Astrocyte of the cerebellum (primary cell): ENCODE measurements at regions of chr4 and their contacts with region 1.

Region 1: DNA sequence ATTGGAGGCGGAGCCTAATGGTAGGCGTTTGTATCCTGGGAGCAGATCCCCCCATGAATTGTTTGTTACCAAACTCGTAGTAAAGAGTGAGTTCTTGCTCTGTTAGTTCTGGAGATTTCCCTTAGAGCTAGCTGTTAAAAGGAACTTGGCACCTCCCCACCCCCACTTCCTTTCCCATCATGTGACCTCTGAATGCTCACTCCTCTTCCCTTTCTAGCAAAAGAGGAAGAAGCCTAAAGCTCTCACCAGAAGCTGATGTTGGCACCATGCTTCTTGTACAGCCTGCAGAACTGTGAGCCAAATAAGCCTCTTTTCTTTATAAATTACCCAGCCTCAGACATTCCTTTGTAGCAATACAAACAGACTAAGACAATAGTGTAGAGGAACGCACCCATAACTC is 13.8 kb upstream of the ATOH1 start:
- DNase-seq: no peak
- H3K4me3 ChIP-seq: no peak overlapping the region
- CTCF ChIP-seq: no peak

Region 2: DNA sequence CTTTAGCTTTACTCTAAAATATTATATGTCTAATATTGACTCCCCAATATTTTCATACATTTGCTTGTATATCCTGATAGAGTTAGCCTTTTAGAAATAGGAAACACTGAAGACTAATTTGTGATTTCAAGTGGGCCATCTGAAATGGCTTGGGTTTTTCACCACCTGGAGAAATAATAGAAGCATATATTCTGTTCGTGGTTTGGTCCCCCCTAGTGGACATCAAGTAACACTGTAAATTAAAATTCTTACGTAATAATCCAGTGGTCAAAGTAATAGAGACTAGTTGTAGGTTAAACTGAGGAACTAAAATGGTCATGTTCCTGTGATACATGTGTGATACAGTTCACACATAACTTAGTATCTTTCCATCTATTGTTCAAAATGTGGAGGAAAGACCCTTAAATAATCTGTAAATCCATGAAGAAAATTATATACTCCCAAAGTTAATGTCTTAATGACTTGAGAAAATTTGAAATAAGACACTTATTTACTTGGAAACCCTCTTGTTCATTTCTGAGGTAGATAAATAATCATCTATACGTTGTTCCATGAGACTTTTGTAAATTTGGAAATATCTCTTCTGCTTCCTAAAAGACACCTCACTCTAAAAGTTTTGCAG is 313.1 kb after region 1 on chr4:
- in situ Hi-C with region 1: loop called (anchors 25 kb)
- DNase-seq: peak; percentile 36
- H3K4me3 ChIP-seq: no peak overlapping the region
- CTCF ChIP-seq: peak; percentile 49